PC-9 (cell line): ENCODE measurements at regions of chr19 and their contacts with region 1.

Region 1: DNA sequence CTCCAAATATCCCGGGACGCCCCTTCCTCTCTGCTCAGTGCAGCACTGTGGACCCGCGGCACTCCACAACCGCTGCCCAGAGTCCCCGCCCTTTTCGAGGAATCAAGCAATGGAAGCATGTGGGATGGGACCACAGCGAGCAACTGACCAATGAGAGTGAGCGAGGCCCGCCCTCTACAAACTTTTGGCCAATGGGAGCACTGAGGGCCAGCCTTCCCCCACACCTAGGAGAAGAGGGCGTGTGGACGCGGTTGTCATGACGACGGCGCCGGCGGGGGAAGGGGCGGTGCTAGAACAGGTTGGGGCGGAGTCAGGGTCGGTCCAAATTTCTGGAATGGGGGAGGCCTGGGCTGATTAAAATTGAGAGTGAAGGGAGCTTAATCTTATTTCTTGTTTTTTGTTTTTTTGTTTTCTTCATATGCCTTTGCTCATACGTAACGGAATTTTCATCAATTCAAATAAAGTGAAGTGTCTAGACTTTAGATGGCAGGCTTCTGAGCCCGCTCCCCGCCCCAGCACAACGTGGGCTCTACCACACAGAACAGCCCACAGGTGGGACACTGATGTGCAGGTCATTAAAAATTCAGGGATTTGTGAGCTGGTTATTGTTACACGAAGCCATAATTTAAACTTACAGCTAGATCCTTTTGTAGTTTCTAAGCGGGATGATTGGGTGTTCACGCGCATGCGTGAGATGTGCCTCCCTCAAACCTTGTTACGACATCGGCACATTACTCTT is at the start of gene DNAAF3:
- DNase-seq: peak; percentile 96 to 99
- H3K4me3 ChIP-seq: peak within 1 kb of the TSS; percentile 70
- H3K27ac ChIP-seq: peak within 1 kb of the TSS; percentile 71
- H3K4me1 ChIP-seq: peaks cover 13% of the 10 kb centered on the region
- H3K27me3 ChIP-seq: no peaks in the 10 kb centered on the region
- CTCF ChIP-seq: no peak
- total RNA-seq, gene DNAAF3: 51.8 and 76.6 TPM in 2 replicates

Region 2: GRCh38 chr19:55117636-55118391 is 48.9 kb before region 1 on chr19 and contains the start of gene PPP1R12C:
- CTCF ChIA-PET with region 1: no interaction called
- POLR2A ChIA-PET with region 1: no interaction called
- intact Hi-C with region 1: loop called (anchors 2 kb)
- DNase-seq: peak; percentile 98 to 99
- H3K4me3 ChIP-seq: peak within 1 kb of the TSS; percentile 99
- H3K27ac ChIP-seq: peak within 1 kb of the TSS; percentile 47
- H3K4me1 ChIP-seq: peaks cover 22% of the 10 kb centered on the region
- H3K27me3 ChIP-seq: no peaks in the 10 kb centered on the region
- CTCF ChIP-seq: no peak; the same call in 1 of the 2 replicates
- total RNA-seq, gene PPP1R12C: 110 and 114 TPM in 2 replicates

Region 3: GRCh38 chr19:55197531-55197930 is 30.8 kb after region 1 on chr19:
- CTCF ChIA-PET with region 1: no interaction called
- POLR2A ChIA-PET with region 1: no interaction called
- intact Hi-C with region 1: no loop called
- DNase-seq: no peak
- H3K4me3 ChIP-seq: no peak overlapping the region
- H3K27ac ChIP-seq: no peak overlapping the region
- H3K4me1 ChIP-seq: no peaks in the 10 kb centered on the region
- H3K27me3 ChIP-seq: no peaks in the 10 kb centered on the region
- CTCF ChIP-seq: no peak

Region 4: GRCh38 chr19:55216461-55217198 is 49.9 kb after region 1 on chr19:
- CTCF ChIA-PET with region 1: no interaction called
- POLR2A ChIA-PET with region 1: no interaction called
- intact Hi-C with region 1: loop called (anchors 2 kb)
- DNase-seq: peak; percentile 95 to 100
- H3K4me3 ChIP-seq: peak overlapping the region; percentile 61
- H3K27ac ChIP-seq: peak overlapping the region; percentile 92
- H3K4me1 ChIP-seq: peaks cover 15% of the 10 kb centered on the region
- H3K27me3 ChIP-seq: no peaks in the 10 kb centered on the region
- CTCF ChIP-seq: no peak

Region 5: DNA sequence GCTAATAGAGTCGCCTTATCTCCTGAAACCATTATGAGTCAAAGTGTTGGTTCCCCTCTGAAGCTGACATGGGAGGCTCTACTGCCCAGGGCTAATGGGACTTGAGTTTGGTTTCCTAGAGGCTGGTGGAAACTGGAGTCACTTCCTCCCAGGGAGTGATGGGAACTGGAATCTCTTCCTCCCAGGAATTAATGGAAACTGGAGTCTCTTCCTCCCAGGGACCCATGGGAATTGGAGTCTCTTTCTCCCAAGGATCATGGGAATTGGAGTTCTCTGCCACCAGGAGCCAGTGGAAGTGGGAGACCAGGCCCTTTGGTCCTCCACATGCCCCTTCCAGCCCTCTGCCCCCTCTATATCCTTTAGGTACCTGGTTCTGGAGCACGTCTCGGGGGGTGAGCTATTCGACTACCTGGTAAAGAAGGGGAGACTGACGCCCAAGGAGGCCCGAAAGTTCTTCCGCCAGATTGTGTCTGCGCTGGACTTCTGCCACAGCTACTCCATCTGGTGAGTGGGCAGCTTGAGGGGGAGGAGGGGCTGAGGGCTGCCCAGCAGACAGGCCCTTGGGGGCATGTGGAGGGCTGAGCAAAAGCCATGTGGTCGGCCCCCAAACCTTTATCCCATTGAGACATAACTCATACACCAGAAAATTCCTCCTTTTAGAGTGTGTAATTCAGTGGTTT is 122.6 kb after region 1 on chr19:
- CTCF ChIA-PET with region 1: interaction called, 12 read pairs
- POLR2A ChIA-PET with region 1: no interaction called
- intact Hi-C with region 1: no loop called
- DNase-seq: no peak
- H3K4me3 ChIP-seq: no peak overlapping the region
- H3K27ac ChIP-seq: no peak overlapping the region
- H3K4me1 ChIP-seq: no peaks in the 10 kb centered on the region
- H3K27me3 ChIP-seq: no peaks in the 10 kb centered on the region
- CTCF ChIP-seq: no peak

Region 6: GRCh38 chr19:55385740-55386529 is 219.2 kb after region 1 on chr19 and contains the start of gene RPL28:
- CTCF ChIA-PET with region 1: interaction called, 3 read pairs
- POLR2A ChIA-PET with region 1: interaction called, 11 read pairs
- intact Hi-C with region 1: loop called (anchors 10 kb)
- DNase-seq: peak; percentile 98 to 100
- H3K4me3 ChIP-seq: peak within 1 kb of the TSS; percentile 88
- H3K27ac ChIP-seq: peak within 1 kb of the TSS; percentile 83
- H3K4me1 ChIP-seq: peaks cover 39% of the 10 kb centered on the region
- H3K27me3 ChIP-seq: no peaks in the 10 kb centered on the region
- CTCF ChIP-seq: no peak
- total RNA-seq, gene RPL28: 2,433 and 2,547 TPM in 2 replicates

Region 7: GRCh38 chr19:56211718-56212117 is 1045.0 kb after region 1 on chr19:
- CTCF ChIA-PET with region 1: no interaction called
- POLR2A ChIA-PET with region 1: no interaction called
- intact Hi-C with region 1: no loop called
- DNase-seq: no peak
- H3K4me3 ChIP-seq: no peak overlapping the region
- H3K27ac ChIP-seq: no peak overlapping the region
- H3K4me1 ChIP-seq: no peaks in the 10 kb centered on the region
- H3K27me3 ChIP-seq: peaks cover 79% of the 10 kb centered on the region
- CTCF ChIP-seq: no peak